Natural killer cell (primary cell): ENCODE measurements at regions of chr1 and their contacts with region 1.

Region 1: GRCh38 chr1:21334214-21335087 is 44.2 kb upstream of the ECE1 start:
- DNase-seq: peak; percentile 83 to 92
- ATAC-seq: peak; percentile 86 to 93 (median 90)
- H3K4me3 ChIP-seq: peak overlapping the region; percentile 36
- H3K4me3 Mint-ChIP-seq: peak overlapping the region; percentile 91
- H3K27ac ChIP-seq: peak overlapping the region; percentile 91
- H3K27ac Mint-ChIP-seq: peak overlapping the region; percentile 94 to 98
- H3K4me1 ChIP-seq: peaks cover 65% of the 10 kb centered on the region
- H3K4me1 Mint-ChIP-seq: peaks cover 53 to 81% of the 10 kb centered on the region in 2 donors
- H3K27me3 ChIP-seq: no peaks in the 10 kb centered on the region
- H3K27me3 Mint-ChIP-seq: no peaks in the 10 kb centered on the region
- CTCF ChIP-seq: peak; percentile 59

Region 2: DNA sequence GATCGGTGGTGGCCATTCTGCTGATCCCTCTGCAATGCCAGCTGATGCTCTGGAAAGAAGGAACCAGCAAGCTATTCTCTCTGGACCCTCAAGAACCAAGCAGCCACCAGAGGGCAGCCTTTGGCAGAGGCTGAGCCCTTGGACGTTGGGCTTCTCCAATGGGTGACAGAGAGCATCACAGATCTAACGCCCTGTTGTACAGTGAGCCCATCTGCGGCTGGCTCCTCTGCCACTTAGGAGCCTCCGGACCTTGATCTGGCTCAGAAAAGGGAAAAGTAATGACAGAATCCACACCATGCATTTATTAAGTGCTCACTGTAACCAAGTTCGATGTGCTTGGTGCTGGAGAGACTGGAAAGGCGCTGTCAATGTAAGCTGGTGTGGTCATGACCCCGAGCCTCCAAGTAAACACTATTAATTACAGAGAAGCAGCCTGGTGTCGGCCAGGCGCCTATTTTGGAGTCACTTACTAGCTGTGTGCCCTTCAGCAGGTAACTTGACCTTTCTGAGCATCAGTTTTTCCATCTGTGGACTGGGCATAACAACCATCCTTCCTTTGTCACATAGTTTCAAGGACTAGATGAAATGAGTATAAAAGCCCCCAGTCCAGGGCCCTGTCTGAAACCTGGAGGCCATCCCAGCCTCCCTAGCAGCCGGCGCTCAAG is 79.0 kb before region 1 on chr1:
- intact Hi-C with region 1: loop called (anchors 1 kb)
- DNase-seq: peak; percentile 81 to 88
- ATAC-seq: peak; percentile 86 to 98 (median 95)
- H3K4me3 ChIP-seq: no peak overlapping the region
- H3K4me3 Mint-ChIP-seq: no peak overlapping the region
- H3K27ac ChIP-seq: no peak overlapping the region
- H3K27ac Mint-ChIP-seq: no peak overlapping the region
- H3K4me1 ChIP-seq: peaks cover 7% of the 10 kb centered on the region
- H3K4me1 Mint-ChIP-seq: peaks cover 4 to 13% of the 10 kb centered on the region in 2 donors
- H3K27me3 ChIP-seq: no peaks in the 10 kb centered on the region
- H3K27me3 Mint-ChIP-seq: no peaks in the 10 kb centered on the region
- CTCF ChIP-seq: peak; percentile 77

Region 3: DNA sequence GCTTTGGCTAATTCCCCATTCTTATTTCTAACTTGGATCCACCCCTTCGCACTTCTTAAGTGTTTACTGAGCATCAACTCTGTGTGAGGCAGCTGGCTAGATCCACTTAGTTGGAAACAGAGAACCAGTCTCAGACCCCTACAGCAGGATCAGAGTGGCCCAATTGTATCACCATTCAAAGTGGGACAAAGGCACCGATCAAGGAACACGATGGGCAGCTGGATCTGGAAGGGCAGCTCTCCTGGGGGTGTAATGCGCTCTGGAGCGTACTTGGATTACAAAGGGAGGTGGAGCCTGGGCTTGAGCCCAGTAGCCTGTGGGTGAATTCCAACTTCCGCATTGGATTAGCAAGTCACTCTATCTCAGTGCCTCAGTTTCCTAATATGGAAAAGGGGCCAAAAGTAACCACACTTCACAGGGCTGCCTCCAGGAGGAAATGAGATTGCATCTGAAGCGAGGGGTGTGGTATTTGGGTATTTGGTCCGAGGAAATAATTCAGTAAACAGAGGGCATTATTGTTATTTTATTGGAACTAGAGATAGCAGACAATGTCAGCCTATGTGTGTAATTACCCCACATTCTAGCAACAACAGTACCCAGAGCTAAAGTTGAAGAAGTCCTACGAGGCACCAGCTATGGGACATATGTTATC is 56.1 kb before region 1 on chr1:
- intact Hi-C with region 1: loop called (anchors 2 kb)
- DNase-seq: no peak
- ATAC-seq: peak in 1 of 3 donors; percentile 26
- H3K4me3 ChIP-seq: no peak overlapping the region
- H3K4me3 Mint-ChIP-seq: peak overlapping the region; percentile 72
- H3K27ac ChIP-seq: no peak overlapping the region
- H3K27ac Mint-ChIP-seq: peak overlapping the region; percentile 64 to 73
- H3K4me1 ChIP-seq: peaks cover 31% of the 10 kb centered on the region
- H3K4me1 Mint-ChIP-seq: peaks cover 34 to 40% of the 10 kb centered on the region in 2 donors
- H3K27me3 ChIP-seq: peaks cover 9% of the 10 kb centered on the region
- H3K27me3 Mint-ChIP-seq: peaks cover 0 to 9% of the 10 kb centered on the region in 2 donors
- CTCF ChIP-seq: no peak

Region 4: GRCh38 chr1:21294266-21294989 is 40.0 kb before region 1 on chr1:
- intact Hi-C with region 1: loop called (anchors 1 kb)
- DNase-seq: peak; percentile 74 to 96
- ATAC-seq: peak; percentile 74 to 87 (median 84)
- H3K4me3 ChIP-seq: peak overlapping the region; percentile 23
- H3K4me3 Mint-ChIP-seq: peak overlapping the region; percentile 84
- H3K27ac ChIP-seq: peak overlapping the region; percentile 95
- H3K27ac Mint-ChIP-seq: peak overlapping the region; percentile 94 to 97
- H3K4me1 ChIP-seq: peaks cover 83% of the 10 kb centered on the region
- H3K4me1 Mint-ChIP-seq: peaks cover 37 to 53% of the 10 kb centered on the region in 2 donors
- H3K27me3 ChIP-seq: no peaks in the 10 kb centered on the region
- H3K27me3 Mint-ChIP-seq: peaks cover 0 to 5% of the 10 kb centered on the region in 2 donors
- CTCF ChIP-seq: no peak

Region 5: DNA sequence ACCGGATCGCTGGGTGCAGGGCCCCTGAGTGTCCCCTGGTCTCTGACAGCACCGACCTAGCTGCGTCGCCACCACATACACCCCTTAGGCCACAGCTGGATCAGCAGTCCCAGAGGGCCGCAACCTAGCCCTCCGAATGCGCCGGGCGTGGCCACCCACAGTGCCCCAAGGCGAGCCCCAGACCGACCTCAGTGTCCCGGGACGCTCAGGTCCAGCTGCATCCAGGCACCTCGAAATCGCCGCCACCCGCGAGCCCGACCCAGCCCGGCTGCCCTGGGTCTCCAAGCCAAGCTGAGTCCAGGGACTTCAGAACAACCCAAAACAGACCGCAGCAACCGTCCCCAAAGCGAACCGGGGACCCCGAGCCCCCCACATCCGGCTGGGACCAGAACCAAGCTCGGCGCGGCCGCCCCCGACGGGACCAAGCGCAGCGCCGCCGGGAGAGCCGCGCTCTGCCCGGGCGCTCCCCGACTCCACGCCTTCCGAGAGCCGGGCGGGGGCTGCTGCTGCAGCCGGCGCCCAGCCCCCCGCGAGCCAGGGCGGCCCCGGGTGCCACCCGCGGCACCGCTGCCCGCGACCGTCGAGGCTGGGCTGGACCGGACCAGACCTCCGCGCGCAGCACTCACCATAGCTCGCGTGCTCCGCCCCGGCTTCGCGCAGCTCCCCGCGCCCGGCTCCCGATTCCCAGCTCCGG is 10.4 kb after region 1 on chr1:
- intact Hi-C with region 1: loop called (anchors 1 kb)
- DNase-seq: no peak
- ATAC-seq: peak; percentile 29 to 42 (median 36)
- H3K4me3 ChIP-seq: peak overlapping the region; percentile 80
- H3K4me3 Mint-ChIP-seq: peak overlapping the region; percentile 92
- H3K27ac ChIP-seq: peak overlapping the region; percentile 7
- H3K27ac Mint-ChIP-seq: peak overlapping the region in 1 of 2 donors; percentile 78
- H3K4me1 ChIP-seq: peaks cover 43% of the 10 kb centered on the region
- H3K4me1 Mint-ChIP-seq: peaks cover 42 to 49% of the 10 kb centered on the region in 2 donors
- H3K27me3 ChIP-seq: peaks cover 8% of the 10 kb centered on the region
- H3K27me3 Mint-ChIP-seq: no peaks in the 10 kb centered on the region
- CTCF ChIP-seq: no peak

Region 6: DNA sequence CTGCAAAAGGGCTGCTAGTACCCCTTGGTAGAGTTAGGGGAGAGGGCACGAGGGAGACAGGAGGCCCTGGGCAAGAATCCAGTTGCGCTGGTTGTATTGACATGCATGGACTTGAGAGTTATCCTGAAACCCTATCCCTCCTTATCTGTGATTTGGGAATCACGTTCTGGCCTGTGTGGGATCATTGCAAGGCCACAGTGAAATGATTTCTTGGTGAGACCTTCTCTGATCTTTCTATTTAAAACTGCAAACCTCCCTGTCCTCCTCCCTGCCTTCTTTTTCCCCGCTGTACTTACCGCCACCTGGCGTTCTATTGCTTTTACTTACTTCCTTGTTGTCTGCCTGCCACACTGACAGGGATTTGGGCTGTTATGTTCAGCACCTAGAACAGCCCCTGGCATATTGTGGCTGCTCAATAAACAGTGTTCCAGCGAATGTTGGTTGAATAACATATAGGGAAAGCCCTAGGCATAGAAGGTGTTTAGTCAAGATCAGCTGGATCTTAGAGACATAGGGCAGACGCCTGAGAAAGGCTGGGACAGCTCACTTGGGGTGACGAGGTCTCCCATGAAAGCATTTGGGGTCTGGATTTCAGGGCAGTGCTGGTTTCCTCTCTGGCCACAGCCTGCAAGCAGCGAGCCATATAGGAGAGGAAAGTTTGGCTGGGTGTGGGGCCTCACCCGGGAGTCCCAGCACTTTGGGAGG is 200.4 kb after region 1 on chr1:
- intact Hi-C with region 1: no loop called
- DNase-seq: peak in 1 of 2 donors; percentile 36
- ATAC-seq: no peak
- H3K4me3 ChIP-seq: no peak overlapping the region
- H3K4me3 Mint-ChIP-seq: no peak overlapping the region
- H3K27ac ChIP-seq: no peak overlapping the region
- H3K27ac Mint-ChIP-seq: no peak overlapping the region
- H3K4me1 ChIP-seq: no peaks in the 10 kb centered on the region
- H3K4me1 Mint-ChIP-seq: no peaks in the 10 kb centered on the region
- H3K27me3 ChIP-seq: no peaks in the 10 kb centered on the region
- H3K27me3 Mint-ChIP-seq: peaks cover 22 to 26% of the 10 kb centered on the region in 2 donors
- CTCF ChIP-seq: no peak

Region 7: GRCh38 chr1:22025368-22026155 is 691.1 kb after region 1 on chr1:
- intact Hi-C with region 1: loop called (anchors 10 kb)
- DNase-seq: peak; percentile 80 to 94
- ATAC-seq: peak; percentile 71 to 88 (median 82)
- H3K4me3 ChIP-seq: peak overlapping the region; percentile 59
- H3K4me3 Mint-ChIP-seq: peak overlapping the region; percentile 91
- H3K27ac ChIP-seq: peak overlapping the region; percentile 85
- H3K27ac Mint-ChIP-seq: peak overlapping the region; percentile 95 to 97
- H3K4me1 ChIP-seq: peaks cover 28% of the 10 kb centered on the region
- H3K4me1 Mint-ChIP-seq: peaks cover 36 to 38% of the 10 kb centered on the region in 2 donors
- H3K27me3 ChIP-seq: no peaks in the 10 kb centered on the region
- H3K27me3 Mint-ChIP-seq: no peaks in the 10 kb centered on the region
- CTCF ChIP-seq: no peak